ENCODE measurements at regions of chr11 and their contacts with region 1.

Region 1: DNA sequence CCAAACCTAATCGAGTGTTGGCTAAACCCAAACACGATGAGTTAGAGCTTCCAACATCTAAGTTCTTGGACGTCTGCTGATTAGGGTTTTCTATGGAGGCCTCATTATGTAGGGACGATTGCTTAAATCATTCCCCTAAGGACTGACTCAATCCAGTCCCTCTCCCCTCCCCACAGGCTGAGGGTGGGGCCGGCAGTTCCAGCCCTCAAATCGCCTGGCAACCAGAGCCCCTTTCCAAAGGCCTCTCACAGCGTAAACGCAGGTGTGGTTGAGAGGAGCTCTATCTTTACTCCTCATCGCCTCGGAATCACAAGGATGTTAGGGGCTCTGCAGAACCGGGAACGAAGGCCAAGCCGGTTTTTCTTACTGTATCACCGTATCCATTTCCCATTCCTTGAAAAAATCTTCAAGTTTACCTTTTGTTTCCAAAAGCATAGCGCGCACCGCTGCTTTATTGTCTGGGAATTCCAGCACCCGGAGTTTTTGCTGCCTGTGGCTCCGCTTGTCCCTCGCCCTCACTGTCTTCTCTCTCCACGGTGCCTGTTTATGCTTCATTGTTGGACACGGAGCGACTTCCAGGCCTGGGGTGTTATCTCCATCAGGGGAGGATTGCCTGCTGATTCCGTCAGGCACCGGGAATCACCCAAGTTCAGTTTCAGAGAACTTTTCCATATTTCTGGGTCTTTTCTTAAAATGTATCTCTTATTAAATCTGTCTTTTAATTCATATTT is 13.8 kb upstream of the IFITM3 start:
- DNase-seq: peak in 1 of 2 experiments; percentile 74
- H3K4me3 ChIP-seq: peak overlapping the region in 3 of 4 experiments; percentile 7 to 39 (median 23); a peak in 5 of 8 replicates
- H3K27ac ChIP-seq: peak overlapping the region; percentile 76
- H3K4me1 ChIP-seq: peaks cover 7 to 25% (median 18%) of the 10 kb centered on the region in 4 experiments
- H3K27me3 ChIP-seq: no peaks in the 10 kb centered on the region
- CTCF ChIP-seq: no peak
- EP300 ChIP-seq: no peak
- POLR2A ChIP-seq: peak in 1 of 2 experiments; percentile 70; a peak in 2 of 3 replicates
- RAD21 ChIP-seq: no peak

Region 2: GRCh38 chr11:313787-314547 is 20.5 kb before region 1 on chr11 and contains the start of gene IFITM1:
- CTCF ChIA-PET with region 1: interaction called, 11 read pairs
- POLR2A ChIA-PET with region 1: interaction called, 17 read pairs
- DNase-seq: peak in 1 of 2 experiments; percentile 57
- H3K4me3 ChIP-seq: peak within 1 kb of the TSS; percentile 71 to 94 (median 86)
- H3K27ac ChIP-seq: peak within 1 kb of the TSS; percentile 43; the same call in 1 of the 2 replicates
- H3K4me1 ChIP-seq: peaks cover 9 to 41% (median 31%) of the 10 kb centered on the region in 4 experiments
- H3K27me3 ChIP-seq: no peaks in the 10 kb centered on the region
- CTCF ChIP-seq: no peak
- EP300 ChIP-seq: no peak
- POLR2A ChIP-seq: no peak
- RAD21 ChIP-seq: no peak
- total RNA-seq, gene IFITM1: 394 and 417 TPM in 2 replicates

Measured in H1 (cell line).